ENCODE measurements at regions of chr19 and their contacts with region 1.

Region 1: GRCh38 chr19:47112997-47113849 is at the start of gene ZC3H4:
- DNase-seq: peak; percentile 96 to 100 (median 100)
- ATAC-seq: peak; percentile 90
- H3K4me3 ChIP-seq: peak within 1 kb of the TSS; percentile 84
- H3K4me3 Mint-ChIP-seq: peak within 1 kb of the TSS; percentile 93 to 100 (median 98)
- H3K27ac ChIP-seq: peak within 1 kb of the TSS; percentile 99
- H3K27ac Mint-ChIP-seq: peak within 1 kb of the TSS; percentile 99 to 100 (median 100)
- H3K4me1 ChIP-seq: peaks cover 17 to 25% of the 10 kb centered on the region in 2 donors
- H3K4me1 Mint-ChIP-seq: peaks cover 22 to 38% (median 35%) of the 10 kb centered on the region in 7 donors
- H3K27me3 ChIP-seq: no peaks in the 10 kb centered on the region
- H3K27me3 Mint-ChIP-seq: peaks cover 0 to 2% (median 0%) of the 10 kb centered on the region in 5 donors
- total RNA-seq, gene ZC3H4: 53.6 to 123 (median 73.0) TPM

Region 2: GRCh38 chr19:46634045-46634655 is 479.1 kb before region 1 on chr19:
- CTCF ChIA-PET with region 1: no interaction called
- POLR2A ChIA-PET with region 1: interaction called, 3 read pairs
- intact Hi-C with region 1: loop called in 1 of 2 experiments (anchors 2 kb)
- DNase-seq: peak; percentile 86 to 99 (median 97)
- ATAC-seq: peak; percentile 91
- H3K4me3 ChIP-seq: peak overlapping the region; percentile 62
- H3K4me3 Mint-ChIP-seq: peak overlapping the region in 9 of 10 donors; percentile 81 to 90 (median 87)
- H3K27ac ChIP-seq: peak overlapping the region; percentile 90
- H3K27ac Mint-ChIP-seq: peak overlapping the region in 8 of 9 donors; percentile 66 to 98 (median 94)
- H3K4me1 ChIP-seq: peaks cover 22 to 23% of the 10 kb centered on the region in 2 donors
- H3K4me1 Mint-ChIP-seq: peaks cover 10 to 32% (median 23%) of the 10 kb centered on the region in 7 donors
- H3K27me3 ChIP-seq: no peaks in the 10 kb centered on the region
- H3K27me3 Mint-ChIP-seq: peaks cover 0 to 13% (median 0%) of the 10 kb centered on the region in 5 donors

Region 3: GRCh38 chr19:47035127-47036096 is 77.8 kb before region 1 on chr19:
- CTCF ChIA-PET with region 1: interaction called, 3 read pairs
- POLR2A ChIA-PET with region 1: interaction called, 18 read pairs
- intact Hi-C with region 1: loop called in 1 of 2 experiments (anchors 1 kb)
- DNase-seq: peak; percentile 91 to 100 (median 97)
- ATAC-seq: peak; percentile 99
- H3K4me3 ChIP-seq: peak overlapping the region; percentile 74
- H3K4me3 Mint-ChIP-seq: peak overlapping the region; percentile 83 to 97 (median 92)
- H3K27ac ChIP-seq: peak overlapping the region; percentile 62
- H3K27ac Mint-ChIP-seq: peak overlapping the region; percentile 71 to 93 (median 85)
- H3K4me1 ChIP-seq: peaks cover 11 to 13% of the 10 kb centered on the region in 2 donors
- H3K4me1 Mint-ChIP-seq: peaks cover 7 to 23% (median 16%) of the 10 kb centered on the region in 7 donors
- H3K27me3 ChIP-seq: no peaks in the 10 kb centered on the region
- H3K27me3 Mint-ChIP-seq: peaks cover 6 to 26% (median 14%) of the 10 kb centered on the region in 5 donors

Region 4: GRCh38 chr19:47094557-47095475 is 18.4 kb before region 1 on chr19:
- CTCF ChIA-PET with region 1: interaction called, 6 read pairs
- POLR2A ChIA-PET with region 1: interaction called, 184 read pairs
- intact Hi-C with region 1: loop called (anchors 1 to 2 kb)
- DNase-seq: peak in 5 of 9 donors; percentile 15 to 67 (median 23)
- ATAC-seq: peak; percentile 74
- H3K4me3 ChIP-seq: peak overlapping the region; percentile 28
- H3K4me3 Mint-ChIP-seq: peak overlapping the region in 8 of 10 donors; percentile 16 to 93 (median 62)
- H3K27ac ChIP-seq: peak overlapping the region; percentile 64
- H3K27ac Mint-ChIP-seq: peak overlapping the region; percentile 82 to 99 (median 92)
- H3K4me1 ChIP-seq: peaks cover 19 to 21% of the 10 kb centered on the region in 2 donors
- H3K4me1 Mint-ChIP-seq: peaks cover 36 to 77% (median 43%) of the 10 kb centered on the region in 7 donors
- H3K27me3 ChIP-seq: no peaks in the 10 kb centered on the region
- H3K27me3 Mint-ChIP-seq: no peaks in the 10 kb centered on the region

Region 5: DNA sequence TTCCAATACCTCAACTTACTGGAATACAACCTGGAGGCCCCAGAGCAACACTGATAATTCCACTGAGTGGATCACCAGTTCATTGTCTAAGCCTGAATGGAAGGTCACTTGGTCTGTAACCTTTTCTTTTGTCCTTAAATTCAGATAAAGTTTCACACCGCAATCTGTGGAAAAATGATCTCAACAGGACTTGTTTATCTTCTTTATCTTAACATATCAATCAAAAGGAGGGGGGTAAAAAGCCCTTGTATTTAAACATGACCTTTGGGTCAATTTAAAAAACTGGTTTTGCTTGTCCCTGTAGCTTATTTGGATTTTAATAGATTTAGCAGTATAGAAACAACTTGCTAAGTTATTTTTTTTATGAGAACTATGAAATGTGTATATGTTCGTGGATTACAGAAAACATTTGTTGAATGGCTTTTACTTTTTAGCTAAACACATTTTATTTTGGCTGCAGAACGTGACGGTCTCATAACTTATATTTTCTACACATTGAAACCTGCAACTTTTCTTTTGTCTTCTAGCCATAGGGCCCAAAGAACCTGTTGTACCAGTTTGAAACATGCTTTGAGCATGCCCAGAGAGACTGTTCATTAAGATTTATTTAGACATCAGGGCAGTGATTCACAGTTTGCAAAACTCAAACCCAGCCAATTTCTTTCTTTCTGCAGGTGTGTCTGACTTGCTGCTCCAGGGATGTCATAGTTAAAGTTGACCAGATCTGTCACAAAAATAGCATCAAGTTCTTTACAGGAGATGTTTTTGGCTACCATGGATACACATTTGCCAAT is 39.2 kb after region 1 on chr19:
- CTCF ChIA-PET with region 1: no interaction called
- POLR2A ChIA-PET with region 1: interaction called, 5 read pairs
- intact Hi-C with region 1: loop called in 1 of 2 experiments (anchors 1 kb)
- DNase-seq: no peak
- ATAC-seq: no peak
- H3K4me3 ChIP-seq: no peak overlapping the region
- H3K4me3 Mint-ChIP-seq: no peak overlapping the region
- H3K27ac ChIP-seq: no peak overlapping the region
- H3K27ac Mint-ChIP-seq: peak overlapping the region in 3 of 9 donors; percentile 60 to 88 (median 61)
- H3K4me1 ChIP-seq: peaks cover 24 to 53% of the 10 kb centered on the region in 2 donors
- H3K4me1 Mint-ChIP-seq: peaks cover 26 to 75% (median 61%) of the 10 kb centered on the region in 7 donors
- H3K27me3 ChIP-seq: no peaks in the 10 kb centered on the region
- H3K27me3 Mint-ChIP-seq: no peaks in the 10 kb centered on the region

Region 6: GRCh38 chr19:47256688-47257443 is 143.6 kb after region 1 on chr19:
- CTCF ChIA-PET with region 1: no interaction called
- POLR2A ChIA-PET with region 1: interaction called, 10 read pairs
- intact Hi-C with region 1: loop called (anchors 1 kb)
- DNase-seq: peak; percentile 94 to 100 (median 96)
- ATAC-seq: peak; percentile 88
- H3K4me3 ChIP-seq: peak overlapping the region; percentile 65
- H3K4me3 Mint-ChIP-seq: peak overlapping the region; percentile 85 to 97 (median 90)
- H3K27ac ChIP-seq: peak overlapping the region; percentile 90
- H3K27ac Mint-ChIP-seq: peak overlapping the region; percentile 90 to 99 (median 97)
- H3K4me1 ChIP-seq: peaks cover 15 to 24% of the 10 kb centered on the region in 2 donors
- H3K4me1 Mint-ChIP-seq: peaks cover 35 to 46% (median 39%) of the 10 kb centered on the region in 7 donors
- H3K27me3 ChIP-seq: no peaks in the 10 kb centered on the region
- H3K27me3 Mint-ChIP-seq: peaks cover 0 to 2% (median 0%) of the 10 kb centered on the region in 5 donors

Region 7: DNA sequence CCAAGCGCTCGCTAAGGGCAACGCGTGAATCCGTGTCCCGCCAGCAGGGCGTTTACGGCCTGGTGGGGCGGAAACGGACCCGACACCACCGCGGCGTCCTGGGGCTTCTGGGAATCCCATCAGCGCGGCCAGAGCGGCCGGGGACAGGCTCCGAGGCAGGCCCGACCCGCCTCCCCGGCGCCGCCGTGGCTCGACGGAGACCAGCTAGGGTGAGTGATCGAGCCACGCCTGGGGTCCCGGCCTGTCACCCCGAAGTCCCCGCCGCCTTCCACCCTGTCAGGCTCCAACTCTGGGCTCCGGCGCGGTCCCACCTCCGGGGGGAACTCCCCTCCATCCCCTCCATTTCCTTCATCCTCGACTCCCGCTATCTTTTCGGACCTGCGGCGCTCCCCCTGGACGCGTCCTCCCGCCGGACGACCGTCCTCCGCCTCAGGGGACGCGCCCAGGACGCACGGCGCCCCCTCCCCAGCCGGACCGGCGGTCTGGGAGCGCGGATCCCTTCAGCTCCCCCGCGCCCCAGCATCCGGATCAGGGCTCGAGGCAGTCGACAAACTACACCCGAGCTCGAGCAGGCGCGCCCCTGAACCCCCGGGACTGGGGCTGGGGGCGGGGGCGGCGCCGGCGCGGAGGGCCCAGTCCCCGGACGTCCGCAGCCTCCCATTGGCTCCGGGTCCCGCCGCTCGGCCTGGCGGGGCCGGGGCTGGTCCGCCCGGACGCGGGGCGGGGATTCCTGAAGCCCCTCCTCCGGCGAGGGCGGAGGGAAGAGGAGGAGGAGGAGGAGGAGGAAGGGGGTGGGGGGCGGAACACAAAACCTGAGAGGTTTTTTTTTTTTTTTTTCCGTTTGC is 495.1 kb after region 1 on chr19:
- CTCF ChIA-PET with region 1: no interaction called
- POLR2A ChIA-PET with region 1: no interaction called
- intact Hi-C with region 1: loop called in 1 of 2 experiments (anchors 2 kb)
- DNase-seq: peak; percentile 91 to 99 (median 96)
- ATAC-seq: peak; percentile 96
- H3K4me3 ChIP-seq: peak overlapping the region; percentile 79
- H3K4me3 Mint-ChIP-seq: peak overlapping the region; percentile 70 to 95 (median 86)
- H3K27ac ChIP-seq: peak overlapping the region; percentile 96
- H3K27ac Mint-ChIP-seq: peak overlapping the region; percentile 61 to 92 (median 88)
- H3K4me1 ChIP-seq: peaks cover 16 to 22% of the 10 kb centered on the region in 2 donors
- H3K4me1 Mint-ChIP-seq: peaks cover 12 to 36% (median 28%) of the 10 kb centered on the region in 7 donors
- H3K27me3 ChIP-seq: no peaks in the 10 kb centered on the region
- H3K27me3 Mint-ChIP-seq: peaks cover 0 to 2% (median 0%) of the 10 kb centered on the region in 5 donors